ENCODE measurements at regions of chr4 and their contacts with region 1.

Region 1: DNA sequence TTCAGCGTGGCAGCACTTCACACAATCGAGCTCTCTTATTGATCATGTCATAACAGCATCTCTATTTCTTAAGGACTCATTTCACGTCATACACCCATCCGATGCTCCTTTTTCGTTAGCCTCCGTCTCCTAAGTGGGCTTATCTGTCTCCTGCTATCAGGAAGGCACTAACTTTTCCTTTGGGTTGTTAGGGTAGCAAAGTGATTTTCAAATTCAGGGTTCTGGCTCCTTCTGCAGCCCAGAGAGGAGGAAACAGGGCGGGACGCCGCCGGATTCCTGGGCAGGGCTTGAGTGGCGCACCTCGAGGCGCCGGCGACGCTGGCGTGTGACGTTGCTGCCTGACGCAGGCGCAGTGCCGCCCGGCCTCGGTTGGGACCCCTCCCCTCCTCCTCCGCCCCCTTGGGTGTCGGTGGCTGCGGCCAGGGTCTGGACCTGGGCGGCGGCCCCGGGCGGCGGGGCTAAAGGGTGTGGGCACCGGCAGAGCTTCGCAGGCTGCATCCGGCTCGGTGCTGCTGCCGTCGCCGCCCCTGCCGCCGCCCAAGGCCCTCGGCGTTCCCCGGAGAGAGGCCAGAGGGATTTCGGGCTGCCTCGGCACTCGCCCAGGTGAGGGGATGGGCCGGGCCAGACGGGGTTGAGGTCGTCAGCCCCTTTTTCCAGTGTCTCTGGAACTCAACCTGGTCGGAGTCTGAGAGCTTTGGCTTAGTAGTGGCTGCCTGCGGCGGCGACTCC is at the start of gene BLTP1:
- DNase-seq: peak; percentile 76
- H3K4me3 ChIP-seq: peak within 1 kb of the TSS; percentile 83 to 93 (median 89)
- H3K27ac ChIP-seq: peak within 1 kb of the TSS; percentile 80
- H3K4me1 ChIP-seq: peaks cover 14% of the 10 kb centered on the region
- H3K27me3 ChIP-seq: no peaks in the 10 kb centered on the region
- CTCF ChIP-seq: no peak
- total RNA-seq, gene BLTP1: 43.1 to 133 TPM

Region 2: DNA sequence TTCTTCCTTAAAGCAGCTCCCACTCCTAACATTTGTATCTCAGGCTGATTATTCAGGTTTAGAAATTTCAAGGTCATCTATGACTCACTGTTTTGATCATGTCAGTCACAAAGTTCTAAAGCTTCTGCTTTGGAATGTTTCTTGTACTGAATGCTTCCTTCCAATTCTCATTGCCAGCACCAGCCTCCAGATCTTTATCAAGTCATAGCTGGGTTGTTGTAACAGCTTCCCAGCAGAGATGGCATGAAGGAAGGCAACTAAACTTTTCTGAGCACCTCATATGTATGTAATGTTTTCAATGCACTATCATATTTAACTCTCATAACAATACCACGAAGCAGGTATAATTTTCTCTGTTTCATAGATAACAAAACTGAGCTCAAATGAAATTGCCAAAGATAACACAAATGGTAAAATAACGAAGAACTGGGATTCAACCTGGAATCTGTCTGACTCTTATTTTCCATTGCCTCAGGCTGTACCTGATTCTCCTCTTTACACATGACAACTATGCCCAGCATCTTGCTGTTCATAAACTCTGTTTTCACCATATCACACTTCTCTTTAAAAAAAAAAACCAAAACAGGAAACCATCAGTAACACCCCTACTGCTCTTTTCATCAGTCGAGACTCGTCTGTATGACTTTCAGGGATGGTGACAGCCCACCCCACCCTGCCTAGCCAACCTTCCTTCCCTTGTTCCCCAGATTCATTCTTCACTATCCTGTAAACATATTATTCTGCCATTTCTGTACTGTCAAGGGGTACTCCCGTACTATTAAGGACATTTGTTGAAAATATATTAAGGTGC is 213.7 kb before region 1 on chr4:
- CTCF ChIA-PET with region 1: no interaction called
- dilution Hi-C with region 1: no loop called
- in situ Hi-C with region 1: no loop called
- intact Hi-C with region 1: no loop called
- DNase-seq: no peak
- H3K4me3 ChIP-seq: no peak overlapping the region
- H3K27ac ChIP-seq: no peak overlapping the region
- H3K4me1 ChIP-seq: no peaks in the 10 kb centered on the region
- H3K27me3 ChIP-seq: peaks cover 3% of the 10 kb centered on the region
- CTCF ChIP-seq: no peak

Region 3: DNA sequence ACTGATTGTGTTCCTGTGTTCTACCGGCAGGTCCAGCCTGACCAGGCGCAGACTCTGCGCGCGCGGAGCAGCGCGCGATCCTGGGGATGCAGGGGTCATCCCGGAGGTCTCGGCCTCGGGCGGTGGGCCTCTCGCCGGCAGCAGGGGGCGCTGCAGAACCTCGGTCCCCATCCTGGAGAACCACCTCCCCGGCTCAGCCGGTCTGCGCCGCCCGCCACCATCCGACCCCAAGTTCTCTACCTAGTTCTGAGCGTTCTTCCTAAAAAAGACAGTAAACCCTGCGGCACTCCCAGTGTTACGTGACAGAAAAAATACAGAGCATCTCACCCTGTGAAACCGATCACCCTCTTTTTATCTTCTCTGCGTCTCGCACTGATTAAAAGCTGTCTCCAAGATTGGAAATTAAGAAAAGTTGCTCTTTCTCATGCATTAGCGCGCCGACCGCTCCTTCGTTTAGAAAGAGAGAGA is 201.9 kb before region 1 on chr4:
- CTCF ChIA-PET with region 1: no interaction called
- dilution Hi-C with region 1: no loop called
- in situ Hi-C with region 1: no loop called
- intact Hi-C with region 1: loop called (anchors 1 kb)
- DNase-seq: peak; percentile 16
- H3K4me3 ChIP-seq: peak overlapping the region; percentile 26 to 48 (median 36)
- H3K27ac ChIP-seq: no peak overlapping the region
- H3K4me1 ChIP-seq: peaks cover 18% of the 10 kb centered on the region
- H3K27me3 ChIP-seq: peaks cover 33% of the 10 kb centered on the region
- CTCF ChIP-seq: peak; percentile 22 to 55

Region 4: DNA sequence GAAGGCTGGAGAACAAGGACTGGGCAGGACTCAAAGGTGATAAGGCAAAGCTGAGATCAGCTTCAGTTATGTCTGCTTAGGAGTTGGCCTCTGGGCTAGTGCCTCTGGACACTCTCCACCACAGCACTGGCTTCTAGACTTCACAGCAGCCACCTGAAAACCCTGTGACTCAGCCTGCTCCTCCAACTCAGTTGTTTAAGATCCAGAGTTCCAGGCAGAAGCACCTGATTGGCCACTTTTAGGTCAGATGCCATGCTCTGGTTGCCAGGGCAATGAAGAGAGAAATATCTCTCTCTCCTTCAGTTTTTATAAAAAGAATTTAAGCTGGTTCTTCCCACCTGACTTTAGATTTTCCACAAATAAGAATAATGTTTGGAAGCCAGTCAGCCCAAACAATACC is 48.0 kb before region 1 on chr4:
- CTCF ChIA-PET with region 1: no interaction called
- dilution Hi-C with region 1: no loop called
- in situ Hi-C with region 1: no loop called
- intact Hi-C with region 1: no loop called
- DNase-seq: no peak
- H3K4me3 ChIP-seq: no peak overlapping the region
- H3K27ac ChIP-seq: no peak overlapping the region
- H3K4me1 ChIP-seq: no peaks in the 10 kb centered on the region
- H3K27me3 ChIP-seq: no peaks in the 10 kb centered on the region
- CTCF ChIP-seq: no peak

Region 5: GRCh38 chr4:122178961-122179360 is 26.8 kb after region 1 on chr4:
- CTCF ChIA-PET with region 1: no interaction called
- dilution Hi-C with region 1: no loop called
- in situ Hi-C with region 1: no loop called
- intact Hi-C with region 1: no loop called
- DNase-seq: no peak
- H3K4me3 ChIP-seq: no peak overlapping the region
- H3K27ac ChIP-seq: no peak overlapping the region
- H3K4me1 ChIP-seq: no peaks in the 10 kb centered on the region
- H3K27me3 ChIP-seq: no peaks in the 10 kb centered on the region
- CTCF ChIP-seq: no peak

Measured in mammary epithelial cell (primary cell).